Left ventricle myocardium inferior (tissue), 1 donor: ENCODE measurements at regions of chr12 and their contacts with region 1.

Region 1: DNA sequence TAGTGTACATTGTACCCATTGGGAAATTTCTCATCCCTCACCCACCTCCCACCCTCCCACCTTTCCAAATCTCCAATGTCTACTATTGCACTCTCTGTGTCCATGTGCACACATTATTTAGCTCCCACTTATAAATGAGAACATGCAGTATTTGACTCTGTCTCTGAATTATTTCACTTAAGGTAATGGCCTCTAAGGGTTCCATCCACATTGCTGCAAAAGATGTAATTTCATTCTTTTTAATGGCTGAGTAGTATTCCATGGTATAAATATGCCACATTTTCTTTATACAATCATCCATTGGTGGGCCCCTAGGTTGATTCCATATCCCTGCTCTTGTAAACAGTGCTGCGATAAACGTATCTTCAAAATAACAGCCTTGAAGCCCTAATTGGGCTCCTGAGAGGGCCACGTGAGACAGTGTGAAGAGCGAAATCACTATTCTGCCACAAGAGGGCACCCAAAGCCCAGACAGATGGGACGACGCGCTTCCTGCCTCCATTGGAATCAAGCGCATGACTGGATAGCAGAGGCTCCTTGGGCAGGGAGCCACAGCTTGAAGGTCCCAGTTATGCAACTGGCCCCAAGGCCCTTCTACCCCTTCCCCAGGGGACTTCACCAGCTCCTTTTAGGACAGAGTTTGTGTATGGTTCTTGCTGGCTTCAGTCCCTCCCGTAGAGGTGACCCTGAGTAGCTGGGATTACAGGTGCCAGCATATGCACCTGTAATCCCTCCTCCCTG is 21.3 kb upstream of the CD27 start:
- DNase-seq: peak; percentile 79
- H3K4me3 ChIP-seq: no peak overlapping the region
- H3K27ac ChIP-seq: peak overlapping the region; percentile 33
- H3K4me1 ChIP-seq: peaks cover 9% of the 10 kb centered on the region
- H3K27me3 ChIP-seq: peaks cover 4% of the 10 kb centered on the region
- CTCF ChIP-seq: peak; percentile 93

Region 2: GRCh38 chr12:6470375-6471163 is 47.1 kb after region 1 on chr12 and contains the start of gene VAMP1:
- intact Hi-C with region 1: loop called (anchors 2 kb)
- DNase-seq: peak; percentile 98
- H3K4me3 ChIP-seq: peak within 1 kb of the TSS; percentile 81
- H3K27ac ChIP-seq: peak within 1 kb of the TSS; percentile 92
- H3K4me1 ChIP-seq: peaks cover 34% of the 10 kb centered on the region
- H3K27me3 ChIP-seq: no peaks in the 10 kb centered on the region
- CTCF ChIP-seq: peak; percentile 41
- total RNA-seq, gene VAMP1: 4.2 TPM